ENCODE measurements at regions of chr1 and their contacts with region 1.

Region 1: DNA sequence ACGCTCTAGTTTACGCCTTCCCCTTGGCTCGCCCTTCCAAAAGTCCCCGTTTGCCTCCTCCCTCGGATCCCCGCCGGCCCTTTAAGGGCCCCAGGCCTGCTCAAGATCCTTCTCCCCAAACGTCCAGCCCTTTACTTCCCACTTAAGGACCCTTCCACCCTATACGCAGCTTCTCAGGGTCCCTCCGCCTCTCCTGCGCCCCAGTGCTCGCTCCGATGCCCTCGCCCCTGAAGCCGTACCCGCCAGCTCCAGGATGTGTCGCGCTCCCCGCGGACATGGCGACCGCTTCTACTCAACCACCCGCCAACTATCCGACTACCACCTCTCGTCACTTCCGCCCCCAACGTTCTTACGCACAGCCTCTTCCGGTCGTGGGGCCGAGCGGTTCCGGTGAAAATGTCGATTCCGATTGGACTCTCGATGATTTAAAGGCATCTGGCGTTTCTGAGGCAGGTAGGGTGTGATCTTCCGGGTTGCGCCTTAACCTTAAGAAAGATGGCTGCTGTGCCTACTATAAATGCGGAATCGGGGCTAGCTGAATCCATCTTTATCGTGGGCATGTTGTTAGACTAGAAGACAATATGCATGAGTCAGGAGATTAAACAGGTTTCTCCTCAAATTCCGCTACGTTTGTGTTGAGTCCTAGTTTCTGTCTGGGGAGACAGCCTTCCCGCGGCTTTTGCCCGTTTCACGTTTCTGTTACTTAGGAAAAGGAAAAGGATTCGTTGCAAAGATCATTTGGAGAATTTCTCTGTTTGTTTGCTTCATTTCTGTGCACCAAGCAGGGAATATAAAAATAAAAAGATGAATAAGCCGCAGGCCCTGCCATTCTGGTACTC is at the start of gene KHDC4:
- DNase-seq: peak; percentile 100
- H3K4me3 Mint-ChIP-seq: no peak within 1 kb of the TSS
- H3K27ac Mint-ChIP-seq: no peak within 1 kb of the TSS
- H3K4me1 Mint-ChIP-seq: peaks cover 33% of the 10 kb centered on the region
- H3K27me3 Mint-ChIP-seq: no peaks in the 10 kb centered on the region
- CTCF ChIP-seq: no peak
- total RNA-seq, gene KHDC4: 90.9 and 104 TPM in 2 replicates

Region 2: DNA sequence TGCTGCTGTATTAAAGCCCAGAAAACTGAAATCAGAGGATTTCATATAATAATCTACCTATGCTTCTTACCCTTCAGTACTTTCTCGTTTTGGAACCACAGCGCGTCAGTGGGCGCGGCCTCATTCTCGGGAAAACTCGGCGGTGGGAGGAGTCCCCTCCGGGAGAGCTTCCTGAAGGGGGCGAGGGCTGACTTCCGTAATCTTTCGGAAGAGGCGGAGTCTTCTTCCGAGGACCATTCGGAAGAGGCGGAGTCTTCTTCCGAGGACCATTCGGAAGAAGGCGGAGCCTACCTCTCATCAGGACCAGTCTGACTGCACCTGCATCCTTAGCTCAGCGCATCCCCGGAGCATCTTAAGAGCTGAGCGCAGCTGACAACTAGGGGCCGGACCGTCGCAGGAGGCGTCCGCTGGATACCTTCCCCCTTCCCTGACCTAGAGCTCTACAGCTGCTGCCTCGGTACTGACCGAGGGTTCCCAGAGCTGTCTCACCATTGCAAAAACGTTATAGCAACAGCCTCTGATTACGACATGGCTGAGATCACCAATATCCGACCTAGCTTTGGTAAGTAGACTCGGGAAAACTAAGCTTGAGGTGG is 75.0 kb before region 1 on chr1 and contains the start of gene SYT11:
- CTCF ChIA-PET with region 1: no interaction called
- POLR2A ChIA-PET with region 1: interaction called, 41 read pairs
- intact Hi-C with region 1: no loop called
- DNase-seq: peak; percentile 99
- H3K4me3 Mint-ChIP-seq: peak within 1 kb of the TSS; percentile 99
- H3K27ac Mint-ChIP-seq: no peak within 1 kb of the TSS
- H3K4me1 Mint-ChIP-seq: peaks cover 16% of the 10 kb centered on the region
- H3K27me3 Mint-ChIP-seq: peaks cover 20% of the 10 kb centered on the region
- CTCF ChIP-seq: no peak
- total RNA-seq, gene SYT11: 0.14 TPM in 1 of 2 replicates, not detected in the other

Region 3: DNA sequence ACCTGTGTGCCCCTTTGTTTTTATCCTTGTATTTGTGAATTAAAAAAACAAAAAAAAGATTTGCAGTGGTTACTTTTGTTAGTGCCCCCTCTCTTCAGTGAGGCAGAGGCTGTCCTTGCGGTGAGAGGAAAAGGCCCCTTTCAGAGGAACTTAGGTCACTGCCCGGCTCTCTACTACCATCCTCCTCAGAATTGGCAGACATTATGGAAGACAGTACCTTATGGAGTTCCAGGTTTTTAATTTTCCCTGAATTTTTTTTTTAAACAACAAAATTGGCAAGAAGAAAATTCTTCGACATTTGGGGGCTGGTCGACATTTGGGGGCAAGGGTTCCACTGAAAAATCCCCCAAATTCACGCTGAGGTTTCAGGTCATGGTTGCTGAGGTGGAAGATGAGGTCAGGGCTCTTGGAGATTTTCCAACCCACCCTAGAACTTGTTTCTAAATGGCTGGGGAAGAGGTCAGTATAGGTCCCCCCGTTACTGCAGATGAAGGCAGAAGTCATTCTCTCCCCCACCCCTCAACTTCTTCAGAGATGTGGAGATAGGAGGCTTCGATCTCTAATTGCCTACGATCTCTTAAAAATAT is 12.4 kb after region 1 on chr1:
- CTCF ChIA-PET with region 1: interaction called, 11 read pairs
- POLR2A ChIA-PET with region 1: interaction called, 20 read pairs
- intact Hi-C with region 1: no loop called
- DNase-seq: no peak
- H3K4me3 Mint-ChIP-seq: no peak overlapping the region
- H3K27ac Mint-ChIP-seq: peak overlapping the region; percentile 14
- H3K4me1 Mint-ChIP-seq: peaks cover 30% of the 10 kb centered on the region
- H3K27me3 Mint-ChIP-seq: no peaks in the 10 kb centered on the region
- CTCF ChIP-seq: no peak

Region 4: GRCh38 chr1:155978325-155978972 is 44.1 kb after region 1 on chr1 and contains the start of gene ARHGEF2:
- CTCF ChIA-PET with region 1: interaction called, 136 read pairs
- POLR2A ChIA-PET with region 1: interaction called, 294 read pairs
- intact Hi-C with region 1: loop called (anchors 1 kb)
- DNase-seq: peak; percentile 89
- H3K4me3 Mint-ChIP-seq: peak within 1 kb of the TSS; percentile 81
- H3K27ac Mint-ChIP-seq: peak within 1 kb of the TSS; percentile 90
- H3K4me1 Mint-ChIP-seq: peaks cover 83% of the 10 kb centered on the region
- H3K27me3 Mint-ChIP-seq: no peaks in the 10 kb centered on the region
- CTCF ChIP-seq: no peak
- total RNA-seq, gene ARHGEF2: 498 and 555 TPM in 2 replicates

Region 5: DNA sequence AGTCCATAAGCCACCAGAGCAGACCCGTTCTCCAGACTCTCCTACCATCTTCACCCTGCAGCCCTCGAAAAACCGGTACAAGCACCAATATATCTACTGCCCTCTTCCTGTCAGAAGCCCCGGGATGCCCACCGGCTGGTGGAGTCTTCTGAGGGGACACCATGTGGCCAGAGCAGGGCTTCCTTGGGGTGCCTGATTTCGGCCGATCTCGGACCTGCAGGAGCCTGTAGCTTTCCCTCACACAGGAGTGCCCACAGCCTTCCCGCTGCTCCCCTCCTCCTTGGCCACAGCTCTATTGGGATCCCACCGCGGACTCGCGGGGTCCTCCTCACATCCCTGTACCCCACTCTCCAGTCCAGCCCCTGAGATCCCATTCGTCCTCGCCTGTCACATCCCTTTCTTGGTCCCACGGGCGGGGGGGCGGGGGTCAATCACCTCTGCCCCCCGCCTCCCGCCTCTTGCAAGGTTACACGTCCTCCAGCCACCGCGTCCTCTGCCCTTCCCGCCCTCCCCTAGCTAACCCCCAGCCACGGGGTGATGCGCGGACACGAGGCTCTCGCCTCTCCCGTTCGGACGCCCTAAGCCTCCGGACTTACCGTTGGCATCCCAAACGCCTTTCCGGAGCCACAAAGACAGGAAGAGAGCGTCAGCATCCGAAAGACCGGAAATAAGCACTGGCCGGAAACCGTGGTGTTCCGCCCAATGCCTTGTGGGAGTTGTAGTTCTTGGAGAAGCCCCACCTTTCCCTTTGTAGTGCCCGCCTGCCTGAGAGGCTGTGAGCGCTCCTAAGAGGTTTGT is 86.2 kb after region 1 on chr1 and contains the start of gene SSR2:
- CTCF ChIA-PET with region 1: interaction called, 3 read pairs
- POLR2A ChIA-PET with region 1: interaction called, 12 read pairs
- intact Hi-C with region 1: no loop called
- DNase-seq: peak; percentile 98
- H3K4me3 Mint-ChIP-seq: peak within 1 kb of the TSS; percentile 97
- H3K27ac Mint-ChIP-seq: peak within 1 kb of the TSS; percentile 86
- H3K4me1 Mint-ChIP-seq: peaks cover 22% of the 10 kb centered on the region
- H3K27me3 Mint-ChIP-seq: no peaks in the 10 kb centered on the region
- CTCF ChIP-seq: no peak
- total RNA-seq, gene SSR2: 477 and 589 TPM in 2 replicates

Region 6: DNA sequence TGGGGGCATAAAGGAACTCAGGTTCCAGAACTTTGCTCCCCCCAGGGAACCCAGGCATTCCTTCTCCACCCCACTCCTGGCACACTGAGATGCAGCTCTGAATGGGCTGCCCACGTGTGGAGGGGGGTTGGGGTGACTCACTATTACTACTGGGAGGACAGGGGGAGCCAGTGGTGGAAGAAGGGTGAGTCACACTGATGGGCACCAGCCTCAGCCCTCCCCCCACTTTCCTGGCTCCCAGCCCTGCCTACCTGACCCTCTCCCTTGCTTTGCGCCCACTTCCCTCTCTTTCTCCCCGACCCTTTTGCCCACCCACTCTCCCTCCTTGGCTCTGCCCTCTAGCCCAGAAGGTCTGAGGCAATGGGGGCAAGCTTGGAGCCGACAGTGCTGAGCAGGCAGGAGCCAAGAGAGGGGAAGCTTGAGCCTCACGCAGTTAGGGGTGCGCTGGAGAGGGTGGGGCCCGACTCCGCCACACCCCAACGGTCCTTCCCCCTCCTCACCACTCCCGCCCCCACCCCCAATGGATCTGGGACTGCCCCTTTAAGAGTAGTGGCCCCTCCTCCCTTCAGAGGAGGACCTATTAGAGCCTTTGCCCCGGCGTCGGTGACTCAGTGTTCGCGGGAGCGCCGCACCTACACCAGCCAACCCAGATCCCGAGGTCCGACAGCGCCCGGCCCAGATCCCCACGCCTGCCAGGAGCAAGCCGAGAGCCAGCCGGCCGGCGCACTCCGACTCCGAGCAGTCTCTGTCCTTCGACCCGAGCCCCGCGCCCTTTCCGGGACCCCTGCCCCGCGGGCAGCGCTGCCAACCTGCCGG is 180.0 kb after region 1 on chr1 and contains the start of gene LMNA:
- CTCF ChIA-PET with region 1: no interaction called
- POLR2A ChIA-PET with region 1: interaction called, 42 read pairs
- intact Hi-C with region 1: no loop called
- DNase-seq: peak; percentile 100
- H3K4me3 Mint-ChIP-seq: peak within 1 kb of the TSS; percentile 79
- H3K27ac Mint-ChIP-seq: peak within 1 kb of the TSS; percentile 97
- H3K4me1 Mint-ChIP-seq: peaks cover 46% of the 10 kb centered on the region
- H3K27me3 Mint-ChIP-seq: no peaks in the 10 kb centered on the region
- CTCF ChIP-seq: no peak
- total RNA-seq, gene LMNA: 620 and 716 TPM in 2 replicates

Region 7: DNA sequence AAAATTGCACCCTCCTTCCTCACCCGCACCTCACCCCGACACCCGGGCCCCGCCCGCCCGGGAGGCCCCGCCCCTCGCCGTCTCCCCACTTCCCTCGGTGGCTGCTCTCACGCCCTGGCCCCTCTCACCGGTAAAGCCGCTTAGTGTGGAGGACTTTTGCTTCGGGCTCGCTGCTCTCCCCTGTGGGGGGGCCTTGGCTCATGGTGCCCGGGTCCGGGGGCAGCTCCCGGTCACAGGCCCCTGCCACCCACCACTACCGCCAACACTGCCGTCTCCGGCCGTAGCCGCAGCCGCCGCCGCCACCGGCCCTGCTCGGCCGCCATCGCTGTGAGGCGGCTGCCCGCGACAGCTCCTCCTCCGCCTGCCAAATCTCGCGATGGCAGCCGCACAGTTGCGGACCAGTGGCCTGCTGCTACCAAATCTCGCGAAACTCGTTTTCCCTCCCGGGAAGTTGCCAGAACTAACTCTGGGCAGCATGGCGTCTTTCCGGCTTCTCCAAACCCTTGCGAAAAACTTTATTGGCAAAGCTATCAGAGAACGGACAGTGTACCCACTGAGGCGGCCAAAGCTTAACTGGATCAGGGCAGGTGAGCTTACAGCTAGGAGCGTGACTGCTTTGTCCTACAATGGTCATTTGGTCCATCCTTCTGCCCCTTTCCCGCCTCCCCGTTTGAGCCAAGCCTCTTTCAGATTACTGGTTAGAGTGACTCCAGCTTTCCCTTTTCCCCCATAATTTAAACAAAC is 348.3 kb after region 1 on chr1 and contains the start of gene SMG5:
- CTCF ChIA-PET with region 1: no interaction called
- POLR2A ChIA-PET with region 1: interaction called, 24 read pairs
- intact Hi-C with region 1: no loop called
- DNase-seq: peak; percentile 100
- H3K4me3 Mint-ChIP-seq: peak within 1 kb of the TSS; percentile 92
- H3K27ac Mint-ChIP-seq: peak within 1 kb of the TSS; percentile 93
- H3K4me1 Mint-ChIP-seq: peaks cover 38% of the 10 kb centered on the region
- H3K27me3 Mint-ChIP-seq: no peaks in the 10 kb centered on the region
- CTCF ChIP-seq: no peak
- total RNA-seq, gene SMG5: 118 and 140 TPM in 2 replicates